G401 (cell line): ENCODE measurements at regions of chr5 and their contacts with region 1.

Region 1: DNA sequence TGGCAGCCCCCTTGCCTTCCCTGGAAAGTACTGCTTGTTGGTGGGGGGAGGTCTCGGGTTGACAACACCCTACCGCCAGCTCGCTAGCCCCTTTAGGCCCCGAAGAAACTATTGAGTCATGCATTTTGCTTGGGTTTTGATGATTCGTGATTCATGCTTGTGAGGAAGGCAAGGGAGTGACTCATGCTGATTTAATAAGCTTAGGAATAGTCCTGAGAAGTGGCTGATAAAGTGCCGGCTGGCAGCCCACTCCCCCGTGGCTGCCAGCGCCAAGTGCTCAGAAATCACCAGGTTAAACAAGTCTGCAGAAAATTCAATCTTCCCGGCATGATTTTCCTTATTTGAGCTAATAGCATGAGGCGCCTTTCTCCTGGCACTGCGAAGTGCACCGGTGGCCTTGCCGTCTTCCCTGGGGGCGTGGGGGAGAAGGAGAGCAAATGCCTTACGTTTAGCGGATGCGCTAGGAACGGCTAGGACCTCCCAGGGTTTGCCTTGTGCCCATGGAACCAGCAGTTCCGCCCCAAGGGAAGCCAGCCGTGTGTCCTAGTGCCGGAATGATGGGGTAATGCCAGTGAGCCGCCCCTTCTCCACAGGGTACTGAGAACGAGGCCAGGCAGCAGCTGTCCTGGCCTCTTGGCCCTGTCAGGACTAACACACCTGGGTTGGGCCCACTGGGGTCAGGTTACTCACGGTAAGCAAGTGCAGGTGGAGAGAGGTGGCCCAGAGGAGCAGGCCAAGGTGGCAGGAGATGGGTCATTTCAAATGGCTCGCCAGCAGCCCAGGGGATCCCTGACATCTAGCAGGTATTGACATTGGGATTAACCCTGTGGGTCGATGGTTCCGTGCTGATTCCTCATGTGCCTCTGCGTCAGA is 151.9 kb downstream of the MACROH2A1 start:
- DNase-seq: no peak

Region 2: GRCh38 chr5:135214897-135215616 is 32.1 kb before region 1 on chr5:
- in situ Hi-C with region 1: loop called (anchors 5 kb)
- DNase-seq: no peak

Region 3: DNA sequence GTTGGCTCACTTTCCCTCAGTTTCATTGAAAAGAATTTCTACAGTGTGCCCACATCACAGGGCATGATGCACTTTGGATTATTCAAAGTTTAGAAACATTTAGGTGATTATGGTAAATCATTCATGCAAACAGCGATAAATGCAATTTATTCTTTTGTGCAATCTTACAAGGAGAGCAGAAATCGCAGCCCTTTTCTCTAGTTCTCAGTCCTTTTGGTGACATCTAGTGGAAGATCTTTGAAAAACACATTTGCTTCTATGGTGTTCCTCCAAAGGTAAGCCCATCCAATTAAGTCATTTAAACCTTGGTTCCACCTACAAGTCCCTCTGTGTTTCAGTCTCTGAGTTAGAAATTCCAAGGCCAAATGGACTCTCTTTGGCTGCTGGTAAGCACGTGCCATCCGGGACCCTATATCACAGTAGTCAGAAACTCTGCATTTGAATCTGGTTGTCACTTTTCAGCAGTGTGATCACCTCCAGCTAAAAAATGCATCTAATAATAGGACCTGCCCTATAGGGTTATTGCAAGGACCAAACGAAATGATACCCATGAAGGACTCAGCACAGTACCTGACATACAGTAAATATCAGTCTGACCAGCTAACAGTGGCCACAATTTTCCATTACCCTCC is 85.5 kb after region 1 on chr5:
- in situ Hi-C with region 1: no loop called
- DNase-seq: peak; percentile 78